ENCODE measurements at regions of chr1 and their contacts with region 1.

Region 1: GRCh38 chr1:203673550-203674427 is 47.2 kb downstream of the ATP2B4 start:
- DNase-seq: peak; percentile 85 to 87
- ATAC-seq: peak; percentile 92 to 93
- H3K4me3 ChIP-seq: no peak overlapping the region
- H3K27ac ChIP-seq: peak overlapping the region; percentile 49 to 80
- H3K4me1 ChIP-seq: peaks cover 36% of the 10 kb centered on the region
- CTCF ChIP-seq: peak; percentile 38; the same call in 2 of the 3 replicates
- EP300 ChIP-seq: no peak
- POLR2A ChIP-seq: no peak
- RAD21 ChIP-seq: peak; percentile 52 to 55

Region 2: DNA sequence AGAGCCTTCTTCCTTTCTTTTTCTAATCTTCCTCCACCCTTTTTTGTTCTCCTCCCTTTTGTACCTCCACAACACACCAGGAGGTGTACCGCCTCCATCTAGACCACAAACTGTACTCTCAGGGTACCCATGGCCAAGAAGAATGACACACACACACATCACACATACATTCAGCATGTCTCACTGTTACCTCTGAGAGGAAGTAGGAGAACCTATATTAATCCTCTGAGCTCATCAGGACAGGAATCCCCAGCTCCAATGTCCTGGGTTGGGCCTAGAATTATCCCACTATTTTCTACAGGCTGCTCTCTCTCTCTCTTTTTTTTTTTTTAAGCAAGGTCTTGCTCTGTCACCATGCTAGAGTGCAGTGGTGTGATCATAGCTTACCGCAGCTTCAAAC is 10.5 kb before region 1 on chr1:
- CTCF ChIA-PET with region 1: interaction called, 11 read pairs
- POLR2A ChIA-PET with region 1: no interaction called
- DNase-seq: peak; percentile 31 to 52
- ATAC-seq: peak; percentile 88 to 92
- H3K4me3 ChIP-seq: no peak overlapping the region
- H3K27ac ChIP-seq: peak overlapping the region; percentile 6 to 42; a peak in 2 of 6 replicates
- H3K4me1 ChIP-seq: peaks cover 18% of the 10 kb centered on the region; the same call in 2 of the 3 replicates
- CTCF ChIP-seq: no peak
- EP300 ChIP-seq: no peak
- POLR2A ChIP-seq: no peak
- RAD21 ChIP-seq: no peak

Region 3: GRCh38 chr1:203818399-203818798 is 144.6 kb after region 1 on chr1:
- CTCF ChIA-PET with region 1: no interaction called
- POLR2A ChIA-PET with region 1: no interaction called
- DNase-seq: no peak
- ATAC-seq: no peak
- H3K4me3 ChIP-seq: no peak overlapping the region
- H3K27ac ChIP-seq: no peak overlapping the region
- H3K4me1 ChIP-seq: no peaks in the 10 kb centered on the region
- CTCF ChIP-seq: no peak
- EP300 ChIP-seq: no peak
- POLR2A ChIP-seq: no peak
- RAD21 ChIP-seq: no peak